Caco-2 (cell line): ENCODE measurements at regions of chr6 and their contacts with region 1.

Region 1: DNA sequence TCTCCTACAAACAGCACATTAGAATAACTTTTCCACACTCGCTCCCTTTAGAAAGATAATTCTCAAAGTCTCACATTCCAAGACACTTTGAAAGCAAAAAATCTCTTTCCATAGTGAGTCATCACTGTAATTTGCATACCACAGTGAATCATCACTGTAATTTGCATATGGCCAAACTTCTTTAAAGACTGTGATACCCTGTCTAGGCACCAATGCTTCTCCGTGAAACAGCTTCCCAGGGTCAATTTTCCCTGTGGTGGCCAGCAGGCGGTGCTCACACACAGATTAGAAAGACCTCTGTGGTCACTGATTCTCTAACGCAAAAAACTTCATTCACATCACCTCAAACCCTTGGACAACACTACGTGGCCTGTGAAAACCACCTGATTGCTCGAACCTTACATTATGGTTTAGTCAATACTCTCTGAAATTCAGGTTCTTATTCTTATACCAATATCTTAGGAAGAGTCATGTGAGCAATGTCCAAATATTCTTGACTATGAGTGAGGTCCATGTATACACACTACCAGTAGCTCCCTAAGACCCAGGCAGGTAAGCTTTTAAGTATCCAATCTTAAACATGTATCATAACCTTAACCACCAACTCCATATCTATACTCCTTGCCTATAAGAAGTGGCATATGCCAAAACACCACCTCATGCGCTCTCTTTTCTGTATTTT is 78.5 kb upstream of the PHACTR1 start:
- DNase-seq: peak; percentile 56 to 66
- H3K4me3 ChIP-seq: no peak overlapping the region
- H3K4me3 Mint-ChIP-seq: no peak overlapping the region
- H3K27ac Mint-ChIP-seq: no peak overlapping the region
- H3K4me1 ChIP-seq: no peaks in the 10 kb centered on the region
- H3K4me1 Mint-ChIP-seq: peaks cover 8% of the 10 kb centered on the region
- H3K27me3 ChIP-seq: no peaks in the 10 kb centered on the region
- H3K27me3 Mint-ChIP-seq: peaks cover 7% of the 10 kb centered on the region
- CTCF ChIP-seq: peak; percentile 87 to 89

Region 2: GRCh38 chr6:12653486-12653885 is 15.4 kb after region 1 on chr6:
- CTCF ChIA-PET with region 1: no interaction called
- POLR2A ChIA-PET with region 1: no interaction called
- intact Hi-C with region 1: no loop called
- DNase-seq: no peak
- H3K4me3 ChIP-seq: no peak overlapping the region
- H3K4me3 Mint-ChIP-seq: no peak overlapping the region
- H3K27ac Mint-ChIP-seq: no peak overlapping the region
- H3K4me1 ChIP-seq: no peaks in the 10 kb centered on the region
- H3K4me1 Mint-ChIP-seq: no peaks in the 10 kb centered on the region
- H3K27me3 ChIP-seq: no peaks in the 10 kb centered on the region
- H3K27me3 Mint-ChIP-seq: peaks cover 9% of the 10 kb centered on the region
- CTCF ChIP-seq: no peak

Region 3: GRCh38 chr6:12844290-12845223 is 206.5 kb after region 1 on chr6:
- CTCF ChIA-PET with region 1: interaction called, 4 read pairs
- POLR2A ChIA-PET with region 1: no interaction called
- intact Hi-C with region 1: loop called (anchors 1 kb)
- DNase-seq: peak in 1 of 2 experiments; percentile 11
- H3K4me3 ChIP-seq: no peak overlapping the region
- H3K4me3 Mint-ChIP-seq: no peak overlapping the region
- H3K27ac Mint-ChIP-seq: no peak overlapping the region
- H3K4me1 ChIP-seq: no peaks in the 10 kb centered on the region
- H3K4me1 Mint-ChIP-seq: no peaks in the 10 kb centered on the region
- H3K27me3 ChIP-seq: no peaks in the 10 kb centered on the region; the same call in 1 of the 2 replicates
- H3K27me3 Mint-ChIP-seq: peaks cover 14% of the 10 kb centered on the region
- CTCF ChIP-seq: peak; percentile 58 to 68

Region 4: DNA sequence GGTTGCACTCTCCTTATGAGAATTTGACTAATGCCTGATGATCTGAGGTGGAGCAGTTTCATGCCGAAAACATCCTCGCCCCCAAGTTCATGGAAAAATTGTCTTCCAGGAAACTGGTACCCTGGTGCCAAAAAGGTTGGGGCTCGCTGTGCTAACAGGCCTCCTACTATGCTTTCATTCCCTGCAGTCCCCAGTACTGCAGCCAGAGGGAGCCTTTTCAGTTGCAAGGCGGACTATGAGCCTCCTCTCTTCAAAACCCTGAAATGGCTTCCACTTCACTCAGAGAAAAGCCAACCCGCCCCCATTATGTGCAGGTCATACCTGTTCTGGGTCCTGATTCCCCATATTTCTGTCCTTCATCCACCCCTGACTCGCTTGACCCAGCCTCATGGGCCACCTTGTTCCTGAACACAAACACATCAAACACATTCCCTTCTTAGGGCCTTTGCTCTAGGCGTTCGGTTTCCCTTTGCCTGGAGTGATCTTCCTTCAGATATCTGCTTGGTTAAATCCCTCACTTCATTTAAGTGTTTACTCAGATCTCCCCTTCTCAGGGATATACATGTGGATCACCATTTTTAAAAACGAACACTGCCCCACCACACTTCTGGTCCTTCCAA is 252.2 kb after region 1 on chr6:
- CTCF ChIA-PET with region 1: interaction called, 16 read pairs
- POLR2A ChIA-PET with region 1: no interaction called
- intact Hi-C with region 1: loop called (anchors 1 kb)
- DNase-seq: peak in 1 of 2 experiments; percentile 24
- H3K4me3 ChIP-seq: no peak overlapping the region
- H3K4me3 Mint-ChIP-seq: no peak overlapping the region
- H3K27ac Mint-ChIP-seq: no peak overlapping the region
- H3K4me1 ChIP-seq: no peaks in the 10 kb centered on the region
- H3K4me1 Mint-ChIP-seq: no peaks in the 10 kb centered on the region
- H3K27me3 ChIP-seq: no peaks in the 10 kb centered on the region; the same call in 1 of the 2 replicates
- H3K27me3 Mint-ChIP-seq: peaks cover 2% of the 10 kb centered on the region
- CTCF ChIP-seq: peak; percentile 37 to 51